Endothelial cell of umbilical vein (primary cell): ENCODE measurements at regions of chr20 and their contacts with region 1.

Region 1: GRCh38 chr20:38057351-38057972 is 23.9 kb downstream of the RPRD1B start:
- DNase-seq: peak; percentile 84
- H3K4me3 ChIP-seq: no peak overlapping the region
- H3K27ac ChIP-seq: peak overlapping the region; percentile 71
- H3K4me1 ChIP-seq: peaks cover 22% of the 10 kb centered on the region
- H3K27me3 ChIP-seq: no peaks in the 10 kb centered on the region
- CTCF ChIP-seq: peak; percentile 76 to 93
- POLR2A ChIP-seq: no peak

Region 2: GRCh38 chr20:37901654-37902503 is 155.6 kb before region 1 on chr20:
- CTCF ChIA-PET with region 1: no interaction called
- POLR2A ChIA-PET with region 1: no interaction called
- dilution Hi-C with region 1: no loop called
- intact Hi-C with region 1: loop called (anchors 2 kb)
- DNase-seq: peak; percentile 31
- H3K4me3 ChIP-seq: no peak overlapping the region
- H3K27ac ChIP-seq: no peak overlapping the region
- H3K4me1 ChIP-seq: no peaks in the 10 kb centered on the region
- H3K27me3 ChIP-seq: peaks cover 36 to 38% of the 10 kb centered on the region in 2 experiments
- CTCF ChIP-seq: peak; percentile 36 to 53
- POLR2A ChIP-seq: no peak

Region 3: GRCh38 chr20:38073307-38074071 is 16.0 kb after region 1 on chr20:
- CTCF ChIA-PET with region 1: interaction called, 46 read pairs
- POLR2A ChIA-PET with region 1: no interaction called
- dilution Hi-C with region 1: no loop called
- intact Hi-C with region 1: no loop called
- DNase-seq: peak; percentile 96
- H3K4me3 ChIP-seq: no peak overlapping the region
- H3K27ac ChIP-seq: peak overlapping the region; percentile 35
- H3K4me1 ChIP-seq: peaks cover 14% of the 10 kb centered on the region
- H3K27me3 ChIP-seq: no peaks in the 10 kb centered on the region
- CTCF ChIP-seq: peak; percentile 68 to 82
- POLR2A ChIP-seq: peak; percentile 24

Region 4: DNA sequence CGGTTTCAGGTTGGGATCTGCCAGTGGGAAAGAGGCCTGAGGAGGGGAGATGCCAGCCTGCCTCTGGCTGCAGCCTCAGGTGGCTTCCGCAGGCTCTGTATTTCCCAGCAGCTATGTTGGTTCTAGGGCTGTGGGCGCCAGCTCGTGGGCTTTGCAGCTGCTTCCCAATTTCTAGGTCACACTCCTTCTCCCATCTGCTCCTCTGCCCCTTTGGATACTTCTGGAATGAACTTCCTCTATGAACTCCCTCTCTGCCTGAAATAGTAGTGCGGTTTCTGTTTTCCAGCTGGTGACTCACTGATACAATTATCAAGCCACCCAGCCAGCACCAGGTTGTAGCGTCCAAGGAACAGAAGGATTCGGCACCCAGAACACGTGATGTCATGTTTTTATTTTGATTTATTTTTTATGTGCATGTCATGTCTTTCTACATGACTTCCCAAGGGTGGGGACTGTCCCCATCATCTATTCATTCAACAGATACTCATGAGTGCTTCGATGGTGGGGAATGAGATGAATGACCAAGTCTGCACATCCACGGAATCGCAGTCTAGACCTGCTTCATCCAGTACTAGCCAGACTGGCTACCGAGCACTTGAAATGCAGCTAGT is 69.7 kb after region 1 on chr20:
- CTCF ChIA-PET with region 1: interaction called, 30 read pairs
- POLR2A ChIA-PET with region 1: interaction called, 3 read pairs
- dilution Hi-C with region 1: no loop called
- intact Hi-C with region 1: no loop called
- DNase-seq: peak; percentile 96
- H3K4me3 ChIP-seq: no peak overlapping the region
- H3K27ac ChIP-seq: peak overlapping the region; percentile 60
- H3K4me1 ChIP-seq: peaks cover 52% of the 10 kb centered on the region
- H3K27me3 ChIP-seq: no peaks in the 10 kb centered on the region
- CTCF ChIP-seq: no peak
- POLR2A ChIP-seq: peak; percentile 40

Region 5: GRCh38 chr20:38152621-38153231 is 95.3 kb after region 1 on chr20:
- CTCF ChIA-PET with region 1: interaction called, 27 read pairs
- POLR2A ChIA-PET with region 1: no interaction called
- dilution Hi-C with region 1: no loop called
- intact Hi-C with region 1: loop called (anchors 5 kb)
- DNase-seq: peak; percentile 96
- H3K4me3 ChIP-seq: peak overlapping the region in 1 of 3 experiments; percentile 15
- H3K27ac ChIP-seq: peak overlapping the region; percentile 100
- H3K4me1 ChIP-seq: peaks cover 90% of the 10 kb centered on the region
- H3K27me3 ChIP-seq: no peaks in the 10 kb centered on the region
- CTCF ChIP-seq: no peak
- POLR2A ChIP-seq: no peak

Region 6: GRCh38 chr20:38165089-38165989 is 107.9 kb after region 1 on chr20 and contains the start of gene TGM2:
- CTCF ChIA-PET with region 1: interaction called, 53 read pairs
- POLR2A ChIA-PET with region 1: no interaction called
- dilution Hi-C with region 1: no loop called
- intact Hi-C with region 1: loop called (anchors 1 kb)
- DNase-seq: peak; percentile 88
- H3K4me3 ChIP-seq: peak within 1 kb of the TSS; percentile 26 to 96 (median 68)
- H3K27ac ChIP-seq: peak within 1 kb of the TSS; percentile 96
- H3K4me1 ChIP-seq: peaks cover 81% of the 10 kb centered on the region
- H3K27me3 ChIP-seq: no peaks in the 10 kb centered on the region
- CTCF ChIP-seq: peak; percentile 83 to 89
- POLR2A ChIP-seq: peak; percentile 98
- total RNA-seq, gene TGM2: 708 and 868 TPM in 2 replicates

Region 7: GRCh38 chr20:38406476-38406875 is 349.0 kb after region 1 on chr20:
- CTCF ChIA-PET with region 1: interaction called, 4 read pairs
- POLR2A ChIA-PET with region 1: no interaction called
- dilution Hi-C with region 1: no loop called
- intact Hi-C with region 1: loop called (anchors 5 kb)
- DNase-seq: no peak
- H3K4me3 ChIP-seq: no peak overlapping the region
- H3K27ac ChIP-seq: no peak overlapping the region
- H3K4me1 ChIP-seq: no peaks in the 10 kb centered on the region
- H3K27me3 ChIP-seq: no peaks in the 10 kb centered on the region
- CTCF ChIP-seq: no peak
- POLR2A ChIP-seq: no peak